Activated CD4-positive, alpha-beta memory T cell treated with anti-CD3 and anti-CD28 coated beads, Interleukin-2, amount 10 ng/mL, durations not matched to agents 7 days and 5 days (primary cell): ENCODE measurements at regions of chr3 and their contacts with region 1.

Region 1: DNA sequence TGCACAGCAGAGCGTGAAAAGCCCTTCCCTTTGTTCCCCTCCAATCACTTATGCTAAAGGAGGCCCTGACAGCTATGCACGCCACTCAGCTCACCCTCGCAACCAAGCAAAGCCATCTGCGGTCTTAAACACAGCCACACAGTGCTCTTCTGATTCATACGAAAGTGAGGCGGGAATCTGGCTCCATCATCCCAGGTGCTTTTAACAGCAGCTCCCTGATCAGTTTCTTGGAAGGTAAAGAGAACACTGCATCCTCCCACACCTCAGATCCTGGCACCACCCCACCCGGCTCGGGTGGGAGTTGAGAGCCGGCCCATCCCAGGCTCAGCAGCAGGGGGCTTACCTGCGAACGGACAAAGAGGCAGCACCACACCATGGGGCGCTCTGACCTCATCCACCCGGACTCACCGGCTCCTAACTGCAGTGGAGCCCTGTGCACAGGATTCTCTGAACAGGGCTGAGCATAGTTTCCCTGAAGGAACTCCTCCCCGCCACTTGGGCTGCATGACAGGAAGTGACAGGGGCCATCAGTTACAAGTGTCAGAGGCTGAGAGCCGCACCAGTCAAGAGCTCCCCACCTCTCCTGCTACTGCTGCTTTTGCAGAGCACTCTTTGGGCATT is 114.3 kb upstream of the ARHGEF3 start:
- DNase-seq: peak; percentile 87
- H3K4me3 Mint-ChIP-seq: peak overlapping the region; percentile 97
- H3K27ac Mint-ChIP-seq: peak overlapping the region; percentile 100
- H3K4me1 Mint-ChIP-seq: peaks cover 62% of the 10 kb centered on the region
- H3K27me3 Mint-ChIP-seq: no peaks in the 10 kb centered on the region

Region 2: GRCh38 chr3:56693750-56694149 is 222.3 kb before region 1 on chr3:
- CTCF ChIA-PET with region 1: interaction called, 3 read pairs
- POLR2A ChIA-PET with region 1: interaction called, 20 read pairs
- DNase-seq: no peak
- H3K4me3 Mint-ChIP-seq: peak overlapping the region; percentile 11
- H3K27ac Mint-ChIP-seq: peak overlapping the region; percentile 75
- H3K4me1 Mint-ChIP-seq: peaks cover 43% of the 10 kb centered on the region
- H3K27me3 Mint-ChIP-seq: no peaks in the 10 kb centered on the region

Region 3: GRCh38 chr3:56753206-56753820 is 162.8 kb before region 1 on chr3:
- CTCF ChIA-PET with region 1: no interaction called
- POLR2A ChIA-PET with region 1: interaction called, 22 read pairs
- DNase-seq: peak; percentile 55
- H3K4me3 Mint-ChIP-seq: peak overlapping the region; percentile 3
- H3K27ac Mint-ChIP-seq: peak overlapping the region; percentile 85
- H3K4me1 Mint-ChIP-seq: peaks cover 60% of the 10 kb centered on the region
- H3K27me3 Mint-ChIP-seq: no peaks in the 10 kb centered on the region

Region 4: GRCh38 chr3:56790016-56790821 is 125.9 kb before region 1 on chr3:
- CTCF ChIA-PET with region 1: interaction called, 6 read pairs
- POLR2A ChIA-PET with region 1: interaction called, 38 read pairs
- DNase-seq: peak; percentile 24
- H3K4me3 Mint-ChIP-seq: peak overlapping the region; percentile 51
- H3K27ac Mint-ChIP-seq: peak overlapping the region; percentile 93
- H3K4me1 Mint-ChIP-seq: peaks cover 81% of the 10 kb centered on the region
- H3K27me3 Mint-ChIP-seq: no peaks in the 10 kb centered on the region

Region 5: GRCh38 chr3:56869157-56869889 is 46.8 kb before region 1 on chr3:
- CTCF ChIA-PET with region 1: interaction called, 4 read pairs
- POLR2A ChIA-PET with region 1: interaction called, 10 read pairs
- DNase-seq: no peak
- H3K4me3 Mint-ChIP-seq: no peak overlapping the region
- H3K27ac Mint-ChIP-seq: no peak overlapping the region
- H3K4me1 Mint-ChIP-seq: peaks cover 20% of the 10 kb centered on the region
- H3K27me3 Mint-ChIP-seq: no peaks in the 10 kb centered on the region

Region 6: DNA sequence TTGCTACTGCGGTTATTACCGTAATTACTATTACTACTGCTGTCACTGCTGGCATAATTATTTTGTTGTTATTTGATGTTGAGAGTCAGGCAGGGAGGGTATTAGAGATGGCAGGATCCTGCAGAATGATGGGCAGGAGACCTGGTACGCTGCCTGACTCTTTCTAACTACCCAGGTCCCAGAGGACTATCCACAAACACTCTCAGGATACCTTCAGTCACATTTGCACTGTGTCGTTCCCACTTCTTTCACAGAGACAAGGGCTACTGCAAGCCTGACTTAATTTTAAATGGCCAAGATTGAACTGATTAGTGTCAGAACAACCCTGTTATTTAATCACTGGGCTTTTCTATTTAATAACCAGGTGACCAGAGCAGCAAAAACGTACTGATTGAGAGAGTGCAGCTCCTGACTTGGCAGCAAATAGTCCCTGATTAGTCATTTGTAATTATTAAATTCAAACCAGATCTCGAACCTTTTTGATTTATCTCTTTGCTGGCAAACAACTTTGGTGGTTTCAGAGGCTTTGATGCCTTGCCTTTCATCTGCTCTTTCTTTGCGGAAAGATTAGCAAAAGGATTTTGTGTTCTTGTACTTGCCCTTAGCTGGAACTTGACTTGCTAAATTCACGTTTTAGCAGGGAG is 25.5 kb before region 1 on chr3:
- CTCF ChIA-PET with region 1: interaction called, 5 read pairs
- POLR2A ChIA-PET with region 1: interaction called, 34 read pairs
- DNase-seq: no peak
- H3K4me3 Mint-ChIP-seq: no peak overlapping the region
- H3K27ac Mint-ChIP-seq: no peak overlapping the region
- H3K4me1 Mint-ChIP-seq: peaks cover 58% of the 10 kb centered on the region
- H3K27me3 Mint-ChIP-seq: no peaks in the 10 kb centered on the region

Region 7: GRCh38 chr3:56928379-56929068 is 12.4 kb after region 1 on chr3:
- CTCF ChIA-PET with region 1: interaction called, 5 read pairs
- POLR2A ChIA-PET with region 1: interaction called, 43 read pairs
- DNase-seq: no peak
- H3K4me3 Mint-ChIP-seq: no peak overlapping the region
- H3K27ac Mint-ChIP-seq: peak overlapping the region; percentile 18
- H3K4me1 Mint-ChIP-seq: peaks cover 58% of the 10 kb centered on the region
- H3K27me3 Mint-ChIP-seq: no peaks in the 10 kb centered on the region

Region 8: GRCh38 chr3:57234613-57235575 is 318.8 kb after region 1 on chr3:
- CTCF ChIA-PET with region 1: no interaction called
- POLR2A ChIA-PET with region 1: no interaction called
- DNase-seq: no peak
- H3K4me3 Mint-ChIP-seq: no peak overlapping the region
- H3K27ac Mint-ChIP-seq: no peak overlapping the region
- H3K4me1 Mint-ChIP-seq: peaks cover 11% of the 10 kb centered on the region
- H3K27me3 Mint-ChIP-seq: no peaks in the 10 kb centered on the region